Activated B cell treated with CpG ODN at 0.5 μM for 24 hours (primary cell): ENCODE measurements at regions of chr2 and their contacts with region 1.

Region 1: GRCh38 chr2:68751397-68752339 is 17.1 kb downstream of the ARHGAP25 start:
- DNase-seq: peak; percentile 79
- ATAC-seq: peak; percentile 92
- H3K4me3 Mint-ChIP-seq: peak overlapping the region; percentile 62
- H3K27ac Mint-ChIP-seq: peak overlapping the region; percentile 92
- H3K4me1 Mint-ChIP-seq: peaks cover 83% of the 10 kb centered on the region
- H3K27me3 Mint-ChIP-seq: no peaks in the 10 kb centered on the region
- CTCF ChIP-seq: peak; percentile 67

Region 2: DNA sequence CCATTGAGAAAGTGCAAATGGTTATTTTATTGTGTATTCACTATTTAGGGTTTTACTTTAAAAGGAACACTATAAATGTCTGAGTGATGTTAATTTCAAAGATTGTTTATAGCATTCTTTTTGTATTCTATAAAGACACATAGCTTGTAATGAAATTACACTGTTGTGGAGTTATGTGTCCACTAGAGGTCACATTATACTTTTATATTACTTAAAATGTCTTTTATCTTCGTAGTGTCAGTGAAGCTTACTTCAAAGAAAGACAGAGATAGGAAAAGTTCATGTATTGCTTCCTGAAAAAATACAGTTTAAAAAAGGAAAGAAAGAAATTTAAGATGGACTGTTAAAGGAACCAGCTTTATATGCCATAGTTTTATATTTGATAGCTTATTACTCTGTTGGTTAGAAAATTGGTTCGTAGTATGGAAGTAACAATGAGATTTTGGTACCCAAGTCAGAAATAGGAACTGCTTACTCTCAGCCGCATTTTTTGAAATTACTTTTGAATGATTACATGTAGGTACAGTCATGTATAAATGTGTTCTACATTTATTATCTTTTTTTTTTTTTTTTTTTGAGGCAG is 263.8 kb before region 1 on chr2:
- CTCF ChIA-PET with region 1: interaction called, 12 read pairs
- POLR2A ChIA-PET with region 1: no interaction called
- intact Hi-C with region 1: no loop called
- DNase-seq: no peak
- ATAC-seq: peak; percentile 54
- H3K4me3 Mint-ChIP-seq: no peak overlapping the region
- H3K27ac Mint-ChIP-seq: no peak overlapping the region
- H3K4me1 Mint-ChIP-seq: peaks cover 5% of the 10 kb centered on the region
- H3K27me3 Mint-ChIP-seq: no peaks in the 10 kb centered on the region
- CTCF ChIP-seq: peak; percentile 39

Region 3: GRCh38 chr2:68734688-68735525 is 16.8 kb before region 1 on chr2 and contains the start of gene ARHGAP25:
- CTCF ChIA-PET with region 1: interaction called, 24 read pairs
- POLR2A ChIA-PET with region 1: interaction called, 57 read pairs
- intact Hi-C with region 1: loop called (anchors 1 kb)
- DNase-seq: peak; percentile 45
- ATAC-seq: peak; percentile 74
- H3K4me3 Mint-ChIP-seq: no peak within 1 kb of the TSS
- H3K27ac Mint-ChIP-seq: no peak within 1 kb of the TSS
- H3K4me1 Mint-ChIP-seq: peaks cover 37% of the 10 kb centered on the region
- H3K27me3 Mint-ChIP-seq: no peaks in the 10 kb centered on the region
- CTCF ChIP-seq: no peak
- total RNA-seq, gene ARHGAP25: 324 and 336 TPM in 2 replicates

Region 4: GRCh38 chr2:68774569-68775271 is 23.1 kb after region 1 on chr2:
- CTCF ChIA-PET with region 1: interaction called, 84 read pairs
- POLR2A ChIA-PET with region 1: interaction called, 165 read pairs
- intact Hi-C with region 1: loop called (anchors 1 kb)
- DNase-seq: peak; percentile 71
- ATAC-seq: peak; percentile 78
- H3K4me3 Mint-ChIP-seq: peak overlapping the region; percentile 98
- H3K27ac Mint-ChIP-seq: peak overlapping the region; percentile 96
- H3K4me1 Mint-ChIP-seq: peaks cover 82% of the 10 kb centered on the region
- H3K27me3 Mint-ChIP-seq: no peaks in the 10 kb centered on the region
- CTCF ChIP-seq: no peak

Region 5: GRCh38 chr2:68796294-68796905 is 44.7 kb after region 1 on chr2:
- CTCF ChIA-PET with region 1: interaction called, 20 read pairs
- POLR2A ChIA-PET with region 1: interaction called, 103 read pairs
- intact Hi-C with region 1: loop called (anchors 1 kb)
- DNase-seq: no peak
- ATAC-seq: peak; percentile 70
- H3K4me3 Mint-ChIP-seq: peak overlapping the region; percentile 68
- H3K27ac Mint-ChIP-seq: no peak overlapping the region
- H3K4me1 Mint-ChIP-seq: peaks cover 94% of the 10 kb centered on the region
- H3K27me3 Mint-ChIP-seq: no peaks in the 10 kb centered on the region
- CTCF ChIP-seq: no peak

Region 6: DNA sequence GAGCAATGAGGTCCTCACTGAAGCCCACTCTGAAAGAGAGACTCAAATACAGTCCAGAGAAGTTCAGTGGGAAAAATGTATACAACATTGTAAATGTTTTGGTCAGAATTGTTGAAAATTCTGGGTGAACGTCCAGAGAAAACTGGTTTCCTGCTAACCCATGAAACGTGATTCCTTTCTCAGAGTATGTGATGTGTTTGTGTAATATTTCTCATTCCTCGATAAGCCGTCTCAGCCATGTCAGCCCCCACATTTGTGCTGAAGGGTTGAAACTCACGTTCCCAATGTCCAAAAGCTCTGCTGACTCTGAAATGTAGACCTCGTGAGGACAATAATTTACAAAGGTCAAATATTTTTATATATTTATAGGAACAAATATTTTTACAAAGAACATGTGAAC is 67.9 kb after region 1 on chr2:
- CTCF ChIA-PET with region 1: interaction called, 19 read pairs
- POLR2A ChIA-PET with region 1: interaction called, 6 read pairs
- intact Hi-C with region 1: no loop called
- DNase-seq: no peak
- ATAC-seq: no peak
- H3K4me3 Mint-ChIP-seq: no peak overlapping the region
- H3K27ac Mint-ChIP-seq: no peak overlapping the region
- H3K4me1 Mint-ChIP-seq: peaks cover 12% of the 10 kb centered on the region
- H3K27me3 Mint-ChIP-seq: no peaks in the 10 kb centered on the region
- CTCF ChIP-seq: no peak

Region 7: GRCh38 chr2:68837164-68837860 is 85.6 kb after region 1 on chr2:
- CTCF ChIA-PET with region 1: interaction called, 29 read pairs
- POLR2A ChIA-PET with region 1: interaction called, 18 read pairs
- intact Hi-C with region 1: loop called (anchors 1 kb)
- DNase-seq: peak; percentile 53
- ATAC-seq: peak; percentile 33
- H3K4me3 Mint-ChIP-seq: no peak overlapping the region
- H3K27ac Mint-ChIP-seq: peak overlapping the region; percentile 74
- H3K4me1 Mint-ChIP-seq: peaks cover 57% of the 10 kb centered on the region
- H3K27me3 Mint-ChIP-seq: no peaks in the 10 kb centered on the region
- CTCF ChIP-seq: no peak